OCI-LY7 (cell line): ENCODE measurements at regions of chr2 and their contacts with region 1.

Region 1: GRCh38 chr2:74529357-74530238 is at the starts of genes AUP1 and HTRA2:
- DNase-seq: peak; percentile 99
- H3K4me3 ChIP-seq: peak within 1 kb of the TSS; percentile 98
- H3K27ac ChIP-seq: peak within 1 kb of the TSS; percentile 67
- H3K4me1 ChIP-seq: peaks cover 33% of the 10 kb centered on the region
- CTCF ChIP-seq: no peak
- total RNA-seq, gene AUP1: 163 and 188 TPM in 2 replicates
- total RNA-seq, gene HTRA2: 54.8 and 60.4 TPM in 2 replicates

Region 2: DNA sequence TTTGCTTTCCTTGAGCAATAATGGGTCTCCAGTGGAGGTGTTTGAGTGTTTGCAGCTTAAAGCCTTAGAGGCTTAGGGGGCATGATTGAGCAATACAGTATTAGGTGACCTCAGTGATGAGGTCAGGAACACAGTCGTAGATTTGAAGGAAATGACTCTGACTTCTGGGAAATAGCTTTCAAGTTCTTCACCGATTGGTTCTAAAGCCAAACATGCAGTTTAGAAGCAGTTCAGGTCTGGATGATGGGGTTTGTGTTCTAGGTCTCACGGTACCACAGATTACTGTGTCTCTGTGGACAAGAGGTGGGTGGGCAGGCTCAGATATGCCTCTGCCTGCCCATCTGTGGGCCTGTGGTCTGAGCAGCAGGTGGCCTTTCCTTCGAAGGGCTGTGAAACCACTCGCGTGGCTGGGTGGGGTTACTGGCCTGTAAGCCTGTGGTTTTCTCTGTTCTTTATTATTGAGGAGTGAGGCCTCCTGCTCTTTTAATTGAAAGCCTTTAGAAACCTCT is 323.4 kb before region 1 on chr2:
- CTCF ChIA-PET with region 1: no interaction called
- POLR2A ChIA-PET with region 1: no interaction called
- intact Hi-C with region 1: no loop called
- DNase-seq: no peak
- H3K4me3 ChIP-seq: no peak overlapping the region
- H3K27ac ChIP-seq: no peak overlapping the region
- H3K4me1 ChIP-seq: peaks cover 41% of the 10 kb centered on the region
- CTCF ChIP-seq: no peak

Region 3: GRCh38 chr2:74507145-74507925 is 22.3 kb before region 1 on chr2 and contains the start of gene PCGF1:
- CTCF ChIA-PET with region 1: interaction called, 4 read pairs
- POLR2A ChIA-PET with region 1: interaction called, 14 read pairs
- intact Hi-C with region 1: loop called (anchors 1 kb)
- DNase-seq: peak; percentile 99
- H3K4me3 ChIP-seq: peak within 1 kb of the TSS; percentile 77
- H3K27ac ChIP-seq: peak within 1 kb of the TSS; percentile 81
- H3K4me1 ChIP-seq: peaks cover 25% of the 10 kb centered on the region
- CTCF ChIP-seq: peak; percentile 76
- total RNA-seq, gene PCGF1: 9.9 and 16.7 TPM in 2 replicates